ENCODE measurements at regions of chr11 and their contacts with region 1.

Region 1: GRCh38 chr11:57530596-57531507 is at the start of gene TIMM10:
- DNase-seq: peak; percentile 97
- ATAC-seq: peak; percentile 94
- H3K4me3 ChIP-seq: peak within 1 kb of the TSS; percentile 70 to 94 (median 87)
- H3K4me3 Mint-ChIP-seq: peak within 1 kb of the TSS; percentile 94
- H3K27ac ChIP-seq: peak within 1 kb of the TSS; percentile 67 to 91
- H3K27ac Mint-ChIP-seq: peak within 1 kb of the TSS; percentile 95
- H3K4me1 ChIP-seq: peaks cover 13 to 17% of the 10 kb centered on the region in 2 donors
- H3K4me1 Mint-ChIP-seq: peaks cover 24% of the 10 kb centered on the region
- H3K27me3 ChIP-seq: no peaks in the 10 kb centered on the region
- H3K27me3 Mint-ChIP-seq: no peaks in the 10 kb centered on the region
- CTCF ChIP-seq: no peak
- total RNA-seq, gene TIMM10: 39.6 and 39.8 TPM in 2 replicates

Region 2: DNA sequence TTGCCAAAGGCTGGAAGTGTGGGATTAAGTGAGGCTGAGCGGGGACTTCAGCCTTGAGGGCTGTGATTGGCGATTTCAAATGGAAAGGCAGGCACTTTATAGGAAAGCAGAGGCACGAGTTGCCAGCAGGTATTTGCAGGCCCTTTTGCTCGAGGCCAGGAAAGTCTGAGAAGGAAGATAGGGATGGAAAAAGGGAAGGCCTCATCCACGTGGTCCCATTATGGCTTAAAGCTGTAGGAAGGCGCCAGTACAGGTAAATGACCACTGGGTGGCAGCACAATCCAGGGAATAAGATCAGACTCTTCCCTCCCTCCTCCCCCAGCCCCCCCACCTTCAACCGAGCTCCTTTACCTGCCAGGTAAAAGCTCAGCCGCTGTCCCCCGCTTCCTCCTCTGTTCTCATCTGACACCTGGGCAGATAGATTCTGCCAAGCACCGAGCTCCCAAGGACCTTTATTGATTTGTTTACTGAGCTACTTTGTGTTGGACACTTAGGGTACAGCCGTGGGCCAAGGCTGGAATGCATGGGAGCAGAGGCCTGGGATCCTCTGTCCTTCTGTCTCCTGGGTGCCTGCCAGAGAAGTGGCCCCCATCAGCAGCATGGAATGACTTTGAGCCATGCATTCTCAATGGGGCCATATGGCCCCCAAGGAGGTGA is 185.2 kb before region 1 on chr11:
- CTCF ChIA-PET with region 1: interaction called, 22 read pairs
- POLR2A ChIA-PET with region 1: no interaction called
- intact Hi-C with region 1: loop called (anchors 1 kb)
- DNase-seq: peak; percentile 78
- ATAC-seq: peak; percentile 82
- H3K4me3 ChIP-seq: no peak overlapping the region
- H3K4me3 Mint-ChIP-seq: no peak overlapping the region
- H3K27ac ChIP-seq: no peak overlapping the region
- H3K27ac Mint-ChIP-seq: no peak overlapping the region
- H3K4me1 ChIP-seq: peaks cover 0 to 6% of the 10 kb centered on the region in 2 donors
- H3K4me1 Mint-ChIP-seq: peaks cover 6% of the 10 kb centered on the region
- H3K27me3 ChIP-seq: no peaks in the 10 kb centered on the region
- H3K27me3 Mint-ChIP-seq: peaks cover 8% of the 10 kb centered on the region
- CTCF ChIP-seq: peak; percentile 82

Region 3: DNA sequence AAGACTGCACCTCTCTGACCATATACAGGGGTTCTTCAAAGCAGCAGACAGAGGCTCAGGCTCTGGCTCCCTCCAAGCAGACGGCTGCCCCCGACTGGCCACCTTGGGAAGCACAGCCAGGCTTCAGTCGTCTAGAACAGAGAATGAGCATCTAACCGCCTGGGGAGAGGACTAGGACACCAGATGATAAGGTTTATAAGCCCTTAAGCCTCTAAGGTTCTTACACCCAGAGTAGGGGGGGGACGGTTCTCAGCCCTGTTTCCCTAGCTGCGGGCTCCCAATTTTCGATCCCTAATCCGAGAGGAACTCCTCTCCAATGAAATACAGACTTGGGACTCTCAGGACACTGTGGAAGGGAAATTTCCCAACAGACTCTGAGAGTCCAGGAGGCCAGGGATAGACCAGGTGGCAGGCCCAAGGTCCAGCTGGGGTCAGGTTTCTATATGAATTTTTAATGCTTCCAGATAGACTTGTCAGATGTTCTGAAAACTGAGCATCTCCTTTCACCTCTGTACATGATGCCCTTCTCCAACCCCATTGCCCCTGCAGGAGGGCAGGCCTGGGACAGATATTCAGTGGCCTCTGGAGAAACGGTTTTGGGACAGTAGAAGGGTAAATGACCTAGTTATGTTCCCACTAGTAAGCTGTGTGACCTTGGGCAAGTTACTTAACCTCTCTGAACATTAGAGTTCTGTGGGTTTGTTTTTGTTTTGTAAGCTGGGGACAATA is 50.3 kb before region 1 on chr11:
- CTCF ChIA-PET with region 1: interaction called, 38 read pairs
- POLR2A ChIA-PET with region 1: no interaction called
- intact Hi-C with region 1: loop called (anchors 2 kb)
- DNase-seq: peak; percentile 52
- ATAC-seq: peak; percentile 22
- H3K4me3 ChIP-seq: no peak overlapping the region
- H3K4me3 Mint-ChIP-seq: peak overlapping the region; percentile 61
- H3K27ac ChIP-seq: no peak overlapping the region
- H3K27ac Mint-ChIP-seq: no peak overlapping the region
- H3K4me1 ChIP-seq: peaks cover 46 to 53% of the 10 kb centered on the region in 2 donors
- H3K4me1 Mint-ChIP-seq: peaks cover 60% of the 10 kb centered on the region
- H3K27me3 ChIP-seq: peaks cover 0 to 22% (median 9%) of the 10 kb centered on the region in 4 experiments
- H3K27me3 Mint-ChIP-seq: peaks cover 5% of the 10 kb centered on the region
- CTCF ChIP-seq: peak; percentile 63

Region 4: DNA sequence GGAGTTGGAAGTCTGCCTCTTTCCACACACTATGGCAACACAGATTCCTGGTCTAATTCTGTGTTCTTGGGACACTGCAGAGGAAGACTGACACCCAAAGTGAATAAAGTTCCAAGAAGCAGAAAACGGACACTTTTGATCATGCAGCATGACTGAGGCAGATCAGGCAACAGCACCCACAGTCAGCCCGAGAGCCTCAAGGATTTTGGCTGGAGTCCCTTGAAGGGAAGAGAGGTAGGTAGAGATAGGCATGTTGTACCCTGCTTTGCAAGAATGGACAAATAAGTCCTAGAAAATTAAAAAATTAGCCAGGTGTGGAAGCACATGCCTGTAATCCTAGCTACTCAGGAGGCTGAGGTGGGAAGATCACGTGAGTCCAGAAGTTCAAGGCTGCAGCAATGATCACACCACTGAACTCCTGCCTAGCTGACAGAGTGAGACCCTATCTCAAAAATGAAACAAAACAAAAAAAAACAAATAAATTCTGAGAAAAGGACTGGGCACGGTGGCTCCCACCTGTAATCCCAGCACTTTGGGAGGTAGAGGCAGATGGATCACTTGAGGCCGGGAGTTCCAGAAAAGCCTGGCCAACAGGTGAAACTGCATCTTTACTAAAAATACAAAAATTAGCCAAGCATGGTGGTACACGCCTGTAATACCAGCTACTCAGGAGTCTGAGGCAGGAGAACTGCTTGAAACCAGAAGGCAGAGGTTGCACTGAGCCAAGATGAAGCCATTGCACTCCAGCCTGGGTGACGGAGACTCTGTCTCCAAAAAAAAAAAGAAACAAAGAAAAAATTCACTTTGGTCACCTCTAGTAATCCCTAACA is 22.3 kb before region 1 on chr11:
- CTCF ChIA-PET with region 1: interaction called, 98 read pairs
- POLR2A ChIA-PET with region 1: no interaction called
- intact Hi-C with region 1: no loop called
- DNase-seq: no peak
- ATAC-seq: no peak
- H3K4me3 ChIP-seq: no peak overlapping the region
- H3K4me3 Mint-ChIP-seq: no peak overlapping the region
- H3K27ac ChIP-seq: no peak overlapping the region
- H3K27ac Mint-ChIP-seq: no peak overlapping the region
- H3K4me1 ChIP-seq: peaks cover 0 to 7% of the 10 kb centered on the region in 2 donors
- H3K4me1 Mint-ChIP-seq: peaks cover 18% of the 10 kb centered on the region
- H3K27me3 ChIP-seq: no peaks in the 10 kb centered on the region
- H3K27me3 Mint-ChIP-seq: no peaks in the 10 kb centered on the region
- CTCF ChIP-seq: no peak

Region 5: DNA sequence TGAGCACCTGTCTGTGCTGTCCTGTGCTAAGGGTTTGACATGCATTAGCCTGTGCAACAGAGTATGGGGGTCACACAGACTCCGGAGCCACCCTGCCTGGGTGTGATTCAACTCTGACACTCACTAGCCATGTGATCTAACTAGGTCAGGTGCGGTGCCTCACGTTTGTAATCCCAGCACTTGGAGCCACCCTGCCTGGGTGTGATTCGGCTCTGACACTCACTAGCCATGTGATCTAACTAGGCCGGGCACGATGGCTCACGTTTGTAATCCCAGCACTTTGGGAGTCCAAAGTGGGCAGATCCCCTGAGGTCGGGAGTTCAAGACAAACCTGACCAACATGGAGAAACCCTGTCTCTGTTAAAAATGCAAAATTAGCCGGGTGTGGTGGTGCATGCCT is 25.2 kb after region 1 on chr11:
- CTCF ChIA-PET with region 1: no interaction called
- POLR2A ChIA-PET with region 1: no interaction called
- intact Hi-C with region 1: no loop called
- DNase-seq: no peak
- ATAC-seq: no peak
- H3K4me3 ChIP-seq: no peak overlapping the region
- H3K4me3 Mint-ChIP-seq: no peak overlapping the region
- H3K27ac ChIP-seq: no peak overlapping the region
- H3K27ac Mint-ChIP-seq: no peak overlapping the region
- H3K4me1 ChIP-seq: no peaks in the 10 kb centered on the region
- H3K4me1 Mint-ChIP-seq: peaks cover 1% of the 10 kb centered on the region
- H3K27me3 ChIP-seq: no peaks in the 10 kb centered on the region
- H3K27me3 Mint-ChIP-seq: no peaks in the 10 kb centered on the region
- CTCF ChIP-seq: no peak

Region 6: GRCh38 chr11:57567515-57568329 is 36.9 kb after region 1 on chr11 and contains the start of gene UBE2L6:
- CTCF ChIA-PET with region 1: interaction called, 11 read pairs
- POLR2A ChIA-PET with region 1: interaction called, 7 read pairs
- intact Hi-C with region 1: loop called (anchors 1 kb)
- DNase-seq: peak; percentile 82
- ATAC-seq: peak; percentile 69
- H3K4me3 ChIP-seq: peak within 1 kb of the TSS; percentile 83 to 99 (median 98)
- H3K4me3 Mint-ChIP-seq: peak within 1 kb of the TSS; percentile 99
- H3K27ac ChIP-seq: peak within 1 kb of the TSS; percentile 83 to 92
- H3K27ac Mint-ChIP-seq: peak within 1 kb of the TSS; percentile 99
- H3K4me1 ChIP-seq: peaks cover 18 to 26% of the 10 kb centered on the region in 2 donors
- H3K4me1 Mint-ChIP-seq: peaks cover 36% of the 10 kb centered on the region
- H3K27me3 ChIP-seq: no peaks in the 10 kb centered on the region
- H3K27me3 Mint-ChIP-seq: no peaks in the 10 kb centered on the region
- CTCF ChIP-seq: peak; percentile 95
- total RNA-seq, gene UBE2L6: 66.3 and 70.7 TPM in 2 replicates

Region 7: DNA sequence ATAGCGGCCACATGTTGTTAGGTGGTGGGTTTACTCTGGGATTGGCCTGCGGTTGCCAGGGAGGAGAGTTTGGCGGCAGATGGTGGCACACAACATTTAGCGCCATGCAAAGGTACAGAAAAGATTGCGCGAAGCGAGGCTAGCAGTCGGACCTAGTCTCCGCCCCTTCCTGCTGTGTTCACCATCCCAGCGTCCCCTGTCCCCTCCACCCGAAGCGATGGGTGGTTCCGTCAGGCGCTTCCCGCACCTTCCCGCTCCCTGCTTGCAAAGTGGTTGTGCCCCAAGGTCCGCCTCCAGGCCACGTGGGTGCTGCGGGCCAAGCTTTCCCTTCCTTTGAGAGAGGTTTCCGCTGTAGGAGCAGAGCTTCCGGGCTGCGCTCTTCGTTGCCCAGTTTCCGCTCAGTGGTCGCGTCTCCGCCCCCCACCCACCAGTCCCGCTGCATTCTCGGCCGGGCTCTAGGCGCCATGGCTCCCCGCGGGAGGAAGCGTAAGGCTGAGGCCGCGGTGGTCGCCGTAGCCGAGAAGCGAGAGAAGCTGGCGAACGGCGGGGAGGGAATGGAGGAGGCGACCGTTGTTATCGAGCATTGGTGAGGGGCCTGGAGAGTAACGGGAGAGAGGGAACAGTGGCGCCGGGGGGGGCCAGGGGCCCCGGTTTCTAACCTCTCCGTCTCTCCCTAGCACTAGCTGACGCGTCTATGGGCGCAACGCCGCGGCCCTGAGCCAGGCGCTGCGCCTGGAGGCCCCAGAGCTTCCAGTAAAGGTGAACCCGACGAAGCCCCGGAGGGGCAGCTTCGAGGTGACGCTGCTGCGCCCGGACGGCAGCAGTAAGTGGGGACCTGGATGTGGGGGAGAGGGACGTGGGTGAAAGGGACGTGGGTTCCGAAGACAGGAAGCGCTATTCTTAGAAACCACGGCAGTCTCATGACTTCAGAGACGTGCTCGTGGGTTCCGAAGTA is 210.6 kb after region 1 on chr11 and contains the start of gene SELENOH:
- CTCF ChIA-PET with region 1: interaction called, 3 read pairs
- POLR2A ChIA-PET with region 1: no interaction called
- intact Hi-C with region 1: loop called (anchors 1 kb)
- DNase-seq: peak; percentile 93
- ATAC-seq: peak; percentile 83
- H3K4me3 ChIP-seq: peak within 1 kb of the TSS; percentile 83 to 97 (median 94)
- H3K4me3 Mint-ChIP-seq: peak within 1 kb of the TSS; percentile 99
- H3K27ac ChIP-seq: peak within 1 kb of the TSS; percentile 90 to 97
- H3K27ac Mint-ChIP-seq: peak within 1 kb of the TSS; percentile 99
- H3K4me1 ChIP-seq: peaks cover 11 to 32% of the 10 kb centered on the region in 2 donors
- H3K4me1 Mint-ChIP-seq: peaks cover 38% of the 10 kb centered on the region
- H3K27me3 ChIP-seq: no peaks in the 10 kb centered on the region
- H3K27me3 Mint-ChIP-seq: no peaks in the 10 kb centered on the region
- CTCF ChIP-seq: no peak
- total RNA-seq, gene SELENOH: 147 and 153 TPM in 2 replicates

Region 8: GRCh38 chr11:58579192-58580129 is 1048.6 kb after region 1 on chr11:
- CTCF ChIA-PET with region 1: no interaction called
- POLR2A ChIA-PET with region 1: no interaction called
- intact Hi-C with region 1: loop called (anchors 2 kb)
- DNase-seq: peak; percentile 96
- ATAC-seq: peak; percentile 37
- H3K4me3 ChIP-seq: peak overlapping the region; percentile 71 to 100 (median 99)
- H3K4me3 Mint-ChIP-seq: peak overlapping the region; percentile 97
- H3K27ac ChIP-seq: peak overlapping the region; percentile 89 to 100
- H3K27ac Mint-ChIP-seq: peak overlapping the region; percentile 100
- H3K4me1 ChIP-seq: peaks cover 48 to 52% of the 10 kb centered on the region in 2 donors
- H3K4me1 Mint-ChIP-seq: peaks cover 64% of the 10 kb centered on the region
- H3K27me3 ChIP-seq: no peaks in the 10 kb centered on the region
- H3K27me3 Mint-ChIP-seq: no peaks in the 10 kb centered on the region
- CTCF ChIP-seq: peak; percentile 79